ENCODE measurements at regions of chr10 and their contacts with region 1.

Region 1: DNA sequence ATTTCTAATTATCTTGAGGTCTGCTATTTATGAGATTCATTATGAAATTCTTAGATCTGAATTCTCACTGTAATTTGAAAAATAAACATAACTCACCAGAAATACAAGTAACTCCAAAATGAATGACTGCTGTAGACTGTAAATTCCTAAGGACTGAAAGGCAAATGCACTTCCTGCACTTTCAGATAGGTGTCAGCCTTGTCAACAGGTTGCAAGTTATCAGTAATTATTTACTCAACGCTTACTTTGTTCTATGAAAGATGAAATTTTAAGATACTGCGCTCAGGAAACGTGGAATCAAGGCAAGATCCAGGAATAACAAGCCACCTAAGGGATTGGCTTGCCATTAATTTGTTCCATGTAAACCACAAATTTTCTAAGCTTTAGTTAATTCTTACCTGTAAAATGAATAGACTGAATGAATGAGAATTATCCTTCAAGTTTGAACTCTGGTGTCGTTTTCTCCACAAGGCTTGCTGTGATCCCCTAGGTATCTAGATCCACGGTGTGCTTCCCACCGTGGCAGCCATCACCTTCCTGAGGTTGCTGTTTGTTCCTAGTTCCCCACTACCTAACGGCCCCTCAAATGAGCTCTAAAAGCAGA is 12.6 kb downstream of the DHX32 start:
- DNase-seq: peak; percentile 73
- H3K4me3 ChIP-seq: no peak overlapping the region
- H3K27ac ChIP-seq: no peak overlapping the region
- H3K4me1 ChIP-seq: no peaks in the 10 kb centered on the region
- H3K27me3 ChIP-seq: no peaks in the 10 kb centered on the region
- CTCF ChIP-seq: peak; percentile 57 to 61
- POLR2A ChIP-seq: no peak

Region 2: DNA sequence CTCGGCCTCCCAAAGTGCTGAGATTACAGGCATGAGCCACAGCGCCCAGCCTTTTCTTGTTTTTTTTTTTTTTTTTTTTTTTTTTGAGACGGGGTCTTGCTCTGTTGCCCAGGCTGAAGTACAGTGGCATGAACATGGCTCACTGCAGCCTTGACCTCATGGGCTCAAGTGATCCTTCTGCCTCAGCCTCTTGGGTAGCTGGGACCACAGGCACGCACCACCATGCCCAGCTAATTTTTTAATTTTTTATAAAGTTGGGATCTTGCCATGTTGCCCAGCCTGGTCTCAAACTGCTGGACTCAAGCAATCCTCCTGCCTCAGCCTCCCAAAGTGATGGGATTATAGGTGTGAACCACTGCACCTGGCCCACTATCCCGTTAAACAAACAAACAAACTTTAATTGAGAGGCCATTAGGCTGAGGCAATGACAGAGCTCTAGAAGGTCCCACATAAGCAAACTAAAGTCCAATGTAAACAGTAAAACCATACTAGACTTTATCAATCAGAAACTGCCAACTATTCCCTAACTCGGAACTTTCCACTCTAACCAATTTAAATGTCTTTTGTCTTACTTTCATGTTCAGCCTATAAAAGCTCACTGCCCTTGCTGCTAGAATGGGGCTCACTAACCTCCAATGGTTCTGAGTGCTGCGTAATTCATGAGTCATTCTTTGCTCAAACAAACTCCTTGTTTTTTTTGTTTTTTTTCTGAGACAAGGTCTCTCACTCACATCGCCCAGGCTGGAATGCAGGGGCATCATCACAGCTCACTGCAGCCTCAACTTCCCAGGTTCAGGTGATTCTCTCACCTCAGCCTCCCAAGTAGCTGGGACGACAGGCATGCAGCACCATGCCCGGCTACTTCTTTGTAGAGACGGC is 10.7 kb after region 1 on chr10:
- CTCF ChIA-PET with region 1: interaction called, 20 read pairs
- POLR2A ChIA-PET with region 1: no interaction called
- dilution Hi-C with region 1: no loop called
- intact Hi-C with region 1: no loop called
- DNase-seq: peak; percentile 75
- H3K4me3 ChIP-seq: no peak overlapping the region
- H3K27ac ChIP-seq: no peak overlapping the region
- H3K4me1 ChIP-seq: peaks cover 4% of the 10 kb centered on the region
- H3K27me3 ChIP-seq: no peaks in the 10 kb centered on the region
- CTCF ChIP-seq: no peak
- POLR2A ChIP-seq: no peak

Region 3: DNA sequence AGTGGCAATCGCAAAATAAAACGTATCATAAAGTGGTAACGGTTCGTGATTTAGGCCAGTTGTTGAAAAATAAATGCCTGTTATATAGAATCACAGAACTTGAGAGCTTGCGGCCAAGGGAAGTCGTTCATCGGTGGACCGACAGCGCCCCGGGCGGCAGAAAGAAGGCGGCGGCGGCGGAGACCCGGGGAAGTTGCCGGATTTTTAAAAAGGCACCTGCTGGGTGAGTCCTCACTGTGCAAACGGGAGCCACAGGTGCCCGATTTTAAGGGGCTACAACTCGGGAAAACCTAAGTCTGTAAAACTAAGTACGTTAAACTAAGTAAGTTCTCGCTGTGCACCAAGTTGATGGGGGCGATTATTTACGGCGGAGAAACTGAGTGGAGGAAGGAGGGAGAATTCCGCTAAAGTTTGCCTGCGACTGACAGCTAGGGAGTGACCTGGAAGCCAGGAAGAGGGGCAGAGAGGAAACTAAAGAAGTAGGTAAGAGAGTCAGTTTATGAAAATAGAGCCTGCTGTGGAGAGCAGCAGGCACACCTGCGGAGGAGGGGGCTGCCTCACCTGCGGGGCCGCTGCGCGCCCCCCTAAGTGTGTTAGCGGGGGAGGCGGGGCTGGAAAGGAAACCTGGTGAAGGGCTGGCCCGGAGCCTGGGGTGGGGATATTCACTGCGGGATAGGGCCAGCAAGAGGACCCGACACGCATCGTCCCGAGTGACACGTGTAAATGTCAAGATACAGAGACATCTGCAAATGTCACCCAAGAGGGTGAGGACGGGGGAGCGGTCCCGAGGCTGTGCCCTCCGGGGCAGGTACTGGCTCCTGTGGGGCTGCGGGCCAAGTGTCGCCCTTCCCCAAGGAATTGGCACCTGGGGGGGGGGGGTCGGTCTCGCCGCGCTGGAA is 518.8 kb after region 1 on chr10:
- CTCF ChIA-PET with region 1: no interaction called
- POLR2A ChIA-PET with region 1: no interaction called
- dilution Hi-C with region 1: no loop called
- intact Hi-C with region 1: loop called (anchors 1 kb)
- DNase-seq: peak; percentile 48
- H3K4me3 ChIP-seq: no peak overlapping the region
- H3K27ac ChIP-seq: no peak overlapping the region
- H3K4me1 ChIP-seq: no peaks in the 10 kb centered on the region
- H3K27me3 ChIP-seq: peaks cover 3 to 22% of the 10 kb centered on the region in 2 experiments
- CTCF ChIP-seq: peak; percentile 66 to 73
- POLR2A ChIP-seq: no peak

Region 4: DNA sequence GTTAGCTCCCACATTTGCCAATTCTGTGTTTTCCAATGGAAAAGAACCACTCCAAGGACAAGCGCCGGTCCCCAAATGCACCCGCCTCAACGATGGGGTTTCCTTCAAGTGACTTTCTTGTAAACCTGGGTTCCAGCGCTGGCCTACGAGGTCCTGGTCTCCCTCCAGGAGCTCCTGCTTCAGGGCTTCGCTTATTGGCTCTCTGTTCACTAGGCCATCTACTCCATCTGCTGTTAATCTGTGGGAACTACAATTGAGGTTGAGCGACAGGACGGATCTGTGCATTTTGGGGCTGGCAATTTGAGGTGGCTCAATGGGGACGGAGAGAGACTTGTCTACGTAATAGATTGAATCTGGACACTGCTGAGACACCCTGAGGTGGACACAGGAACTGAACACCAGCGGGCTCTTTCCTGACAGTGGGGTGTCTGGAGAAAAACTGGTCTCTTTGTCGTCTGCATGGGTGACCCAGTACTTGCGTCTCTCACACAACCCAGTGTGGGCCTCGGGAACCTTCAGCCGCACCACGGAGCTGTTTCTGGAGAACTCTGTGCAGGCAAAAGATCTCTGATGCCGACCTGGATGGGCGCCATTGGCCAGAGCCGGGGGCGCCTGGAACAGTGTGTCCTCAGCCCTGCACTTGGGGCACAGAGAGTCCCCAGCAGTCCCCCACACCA is 635.7 kb after region 1 on chr10:
- CTCF ChIA-PET with region 1: interaction called, 4 read pairs
- POLR2A ChIA-PET with region 1: no interaction called
- dilution Hi-C with region 1: no loop called
- intact Hi-C with region 1: loop called (anchors 1 kb)
- DNase-seq: peak; percentile 47
- H3K4me3 ChIP-seq: no peak overlapping the region
- H3K27ac ChIP-seq: no peak overlapping the region
- H3K4me1 ChIP-seq: no peaks in the 10 kb centered on the region
- H3K27me3 ChIP-seq: no peaks in the 10 kb centered on the region
- CTCF ChIP-seq: peak; percentile 39 to 50
- POLR2A ChIP-seq: no peak

Region 5: GRCh38 chr10:126598003-126598402 is 729.5 kb after region 1 on chr10:
- CTCF ChIA-PET with region 1: no interaction called
- POLR2A ChIA-PET with region 1: no interaction called
- dilution Hi-C with region 1: no loop called
- intact Hi-C with region 1: loop called (anchors 5 kb)
- DNase-seq: peak; percentile 10
- H3K4me3 ChIP-seq: no peak overlapping the region
- H3K27ac ChIP-seq: no peak overlapping the region
- H3K4me1 ChIP-seq: no peaks in the 10 kb centered on the region
- H3K27me3 ChIP-seq: no peaks in the 10 kb centered on the region
- CTCF ChIP-seq: peak; percentile 18 to 39
- POLR2A ChIP-seq: no peak

Region 6: DNA sequence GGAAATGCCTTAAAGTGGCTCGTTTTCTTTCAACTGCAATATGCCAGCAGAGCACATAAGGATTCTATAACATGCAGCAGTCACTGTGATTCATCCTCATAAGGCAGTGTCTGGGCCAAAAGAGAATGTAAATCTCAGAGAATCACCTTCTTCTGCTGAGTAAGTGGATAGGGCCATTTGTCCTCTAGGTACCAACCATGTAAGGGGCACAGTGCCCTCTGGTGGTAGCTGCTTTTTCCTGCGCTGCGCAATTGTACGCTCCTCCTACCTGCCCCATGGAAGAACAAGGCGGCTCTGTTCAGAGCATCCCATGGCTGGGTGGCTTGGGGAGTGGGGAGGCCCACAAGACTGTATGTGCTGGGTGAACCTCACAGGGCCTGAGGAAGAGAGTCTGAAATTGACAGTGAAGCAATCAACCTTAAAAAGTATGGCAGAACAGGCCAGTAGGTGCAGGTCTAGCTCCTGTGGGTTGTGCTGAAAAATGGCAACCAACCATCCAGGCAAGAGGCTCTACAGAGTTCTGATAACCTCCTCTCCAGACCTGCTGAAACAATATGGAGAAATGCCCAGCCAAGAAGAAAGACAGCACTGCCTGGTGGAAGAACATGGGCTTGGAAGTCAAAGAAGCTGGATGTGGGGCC is 880.7 kb after region 1 on chr10:
- CTCF ChIA-PET with region 1: interaction called, 7 read pairs
- POLR2A ChIA-PET with region 1: no interaction called
- dilution Hi-C with region 1: no loop called
- intact Hi-C with region 1: loop called (anchors 1 kb)
- DNase-seq: peak; percentile 69
- H3K4me3 ChIP-seq: no peak overlapping the region
- H3K27ac ChIP-seq: no peak overlapping the region
- H3K4me1 ChIP-seq: no peaks in the 10 kb centered on the region
- H3K27me3 ChIP-seq: no peaks in the 10 kb centered on the region
- CTCF ChIP-seq: peak; percentile 67 to 69
- POLR2A ChIP-seq: no peak

Measured in endothelial cell of umbilical vein (primary cell).